HEK293 (cell line): ENCODE measurements at regions of chr1 and their contacts with region 1.

Region 1: GRCh38 chr1:145963995-145964901 is at the starts of genes ANKRD34A and POLR3GL:
- H3K4me3 ChIP-seq: peak within 1 kb of the TSS; percentile 70
- H3K27ac ChIP-seq: peak within 1 kb of the TSS; percentile 16; the same call in 1 of the 2 replicates
- H3K4me1 ChIP-seq: peaks cover 9% of the 10 kb centered on the region
- CTCF ChIP-seq: no peak

Region 2: GRCh38 chr1:145711213-145711651 is 253.0 kb before region 1 on chr1:
- CTCF ChIA-PET with region 1: no interaction called
- POLR2A ChIA-PET with region 1: no interaction called
- H3K4me3 ChIP-seq: no peak overlapping the region
- H3K27ac ChIP-seq: no peak overlapping the region
- H3K4me1 ChIP-seq: no peaks in the 10 kb centered on the region
- CTCF ChIP-seq: no peak

Region 3: GRCh38 chr1:145927063-145927886 is 37.0 kb before region 1 on chr1 and contains the start of gene RBM8A:
- CTCF ChIA-PET with region 1: interaction called, 5 read pairs
- POLR2A ChIA-PET with region 1: interaction called, 51 read pairs
- H3K4me3 ChIP-seq: peak within 1 kb of the TSS; percentile 83
- H3K27ac ChIP-seq: peak within 1 kb of the TSS; percentile 59
- H3K4me1 ChIP-seq: no peaks in the 10 kb centered on the region
- CTCF ChIP-seq: peak; percentile 98

Region 4: DNA sequence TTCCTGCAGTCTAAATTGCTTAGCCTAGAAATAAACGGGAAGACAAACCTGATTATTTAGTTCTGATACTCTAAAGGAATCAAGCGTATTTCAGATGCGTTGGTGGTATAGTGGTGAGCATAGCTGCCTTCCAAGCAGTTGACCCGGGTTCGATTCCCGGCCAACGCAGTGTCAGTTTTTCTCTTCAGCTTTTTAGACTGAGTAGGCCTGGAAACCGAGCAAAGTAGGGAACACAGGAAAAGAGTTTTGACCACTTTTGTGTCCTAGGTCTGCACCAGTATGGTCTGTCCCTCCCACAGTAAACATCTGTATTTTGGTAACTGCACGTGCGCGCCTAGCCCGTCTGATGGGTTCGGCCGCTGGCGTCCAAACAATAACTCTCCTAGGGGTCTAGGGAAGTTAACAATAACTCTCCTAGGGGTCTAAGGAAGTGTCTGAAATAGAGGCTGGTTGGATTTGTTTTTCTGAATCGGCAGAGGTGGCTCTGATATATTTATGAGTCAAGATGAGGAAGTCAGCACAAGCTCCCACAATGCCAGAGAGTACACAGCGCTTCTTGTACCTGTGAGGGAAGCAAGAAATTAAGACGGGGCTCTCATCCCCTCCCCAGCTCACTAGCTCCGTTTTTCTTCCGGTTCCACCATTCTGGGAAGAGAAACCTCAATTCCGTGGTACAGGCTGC is 72.9 kb after region 1 on chr1:
- CTCF ChIA-PET with region 1: interaction called, 6 read pairs
- POLR2A ChIA-PET with region 1: interaction called, 16 read pairs
- H3K4me3 ChIP-seq: peak overlapping the region; percentile 74
- H3K27ac ChIP-seq: peak overlapping the region; percentile 86
- H3K4me1 ChIP-seq: no peaks in the 10 kb centered on the region
- CTCF ChIP-seq: no peak

Region 5: GRCh38 chr1:146049436-146049835 is 85.2 kb after region 1 on chr1:
- CTCF ChIA-PET with region 1: no interaction called
- POLR2A ChIA-PET with region 1: interaction called, 11 read pairs
- H3K4me3 ChIP-seq: no peak overlapping the region
- H3K27ac ChIP-seq: no peak overlapping the region
- H3K4me1 ChIP-seq: no peaks in the 10 kb centered on the region
- CTCF ChIP-seq: no peak